Cardiac septum (tissue), 1 donor: ENCODE measurements at regions of chr15 and their contacts with region 1.

Region 1: GRCh38 chr15:42018306-42019224 is 2.3 kb downstream of the PLA2G4E start:
- DNase-seq: no peak

Region 2: GRCh38 chr15:42050484-42051255 is 32.1 kb after region 1 on chr15:
- intact Hi-C with region 1: loop called (anchors 5 kb)
- DNase-seq: peak; percentile 60